SK-MEL-5 (cell line): ENCODE measurements at regions of chr2 and their contacts with region 1.

Region 1: GRCh38 chr2:32792416-32792815 is 154.3 kb upstream of the LTBP1 start:
- DNase-seq: no peak

Region 2: DNA sequence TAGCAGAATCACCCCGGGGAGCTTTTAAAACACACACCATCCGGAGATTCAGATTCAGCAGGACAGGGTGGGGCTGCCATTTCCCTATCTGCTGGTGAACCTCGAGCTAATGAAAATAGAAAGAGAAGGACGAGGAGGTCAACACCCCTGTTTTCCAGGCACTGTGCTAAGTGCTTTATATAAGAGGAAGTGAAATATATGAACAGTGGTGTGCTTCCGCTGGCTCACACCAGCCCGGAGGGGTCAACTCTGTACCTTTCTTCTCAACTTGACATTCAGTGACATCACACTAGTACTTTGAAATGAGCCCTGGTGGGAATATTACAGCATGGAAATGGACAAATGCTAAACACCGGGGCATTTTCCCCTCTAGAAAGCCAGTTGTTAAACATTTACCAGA is 46.0 kb after region 1 on chr2:
- in situ Hi-C with region 1: no loop called
- DNase-seq: no peak

Region 3: GRCh38 chr2:32946314-32947075 is 154.1 kb after region 1 on chr2 and contains the start of gene LTBP1:
- in situ Hi-C with region 1: loop called (anchors 25 kb)
- DNase-seq: peak; percentile 79
- total RNA-seq, gene LTBP1: 6.7 and 8.9 TPM in 2 replicates